ENCODE measurements at regions of chr16 and their contacts with region 1.

Region 1: DNA sequence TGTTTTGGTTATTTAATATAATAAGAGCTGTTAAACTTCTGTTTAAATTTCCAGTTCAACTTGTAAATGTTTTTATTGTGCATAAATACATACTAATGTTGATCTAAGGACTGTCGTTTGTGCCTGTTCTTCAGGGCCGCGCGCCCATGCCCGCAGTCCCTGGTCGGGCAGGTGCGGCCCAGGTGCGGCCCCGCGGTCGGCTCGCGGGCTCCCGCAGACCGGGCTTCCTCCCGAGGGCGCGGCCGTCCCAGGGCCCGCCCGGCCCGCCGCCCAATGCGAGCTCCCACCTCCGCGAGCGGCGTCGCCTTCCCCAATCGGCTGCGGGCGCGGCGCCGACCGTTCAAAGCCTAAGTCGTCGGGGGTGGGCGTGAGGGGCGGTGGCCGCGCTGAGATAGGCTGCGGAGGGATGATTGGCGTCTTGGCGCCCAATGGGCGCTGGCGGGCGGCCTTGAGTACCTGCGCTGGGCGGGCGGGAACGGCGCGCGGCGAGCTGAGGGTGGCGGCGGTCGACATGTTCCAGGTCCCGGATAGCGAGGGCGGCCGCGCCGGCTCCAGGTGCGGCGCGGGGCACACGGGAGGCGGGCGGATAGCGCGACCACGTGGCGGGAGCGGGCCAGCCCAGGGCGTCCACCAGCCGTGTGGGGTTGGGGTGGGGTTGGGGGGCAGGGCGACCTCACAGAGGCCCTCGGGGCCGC is at the start of gene JPT2:
- DNase-seq: peak; percentile 97
- H3K4me3 Mint-ChIP-seq: peak within 1 kb of the TSS; percentile 81
- H3K27ac Mint-ChIP-seq: peak within 1 kb of the TSS; percentile 77
- H3K4me1 Mint-ChIP-seq: peaks cover 40% of the 10 kb centered on the region
- H3K27me3 Mint-ChIP-seq: no peaks in the 10 kb centered on the region
- total RNA-seq, gene JPT2: 44.9 to 48.9 TPM

Region 2: GRCh38 chr16:1610276-1611017 is 67.5 kb before region 1 on chr16:
- CTCF ChIA-PET with region 1: interaction called, 3 read pairs
- POLR2A ChIA-PET with region 1: interaction called, 11 read pairs
- DNase-seq: peak; percentile 92
- H3K4me3 Mint-ChIP-seq: peak overlapping the region; percentile 86
- H3K27ac Mint-ChIP-seq: peak overlapping the region; percentile 100
- H3K4me1 Mint-ChIP-seq: peaks cover 36% of the 10 kb centered on the region
- H3K27me3 Mint-ChIP-seq: no peaks in the 10 kb centered on the region

Region 3: GRCh38 chr16:1809281-1809801 is 131.4 kb after region 1 on chr16:
- CTCF ChIA-PET with region 1: no interaction called
- POLR2A ChIA-PET with region 1: no interaction called
- DNase-seq: no peak
- H3K4me3 Mint-ChIP-seq: no peak overlapping the region
- H3K27ac Mint-ChIP-seq: no peak overlapping the region
- H3K4me1 Mint-ChIP-seq: peaks cover 2% of the 10 kb centered on the region
- H3K27me3 Mint-ChIP-seq: no peaks in the 10 kb centered on the region